ENCODE measurements at regions of chr4 and their contacts with region 1.

Region 1: DNA sequence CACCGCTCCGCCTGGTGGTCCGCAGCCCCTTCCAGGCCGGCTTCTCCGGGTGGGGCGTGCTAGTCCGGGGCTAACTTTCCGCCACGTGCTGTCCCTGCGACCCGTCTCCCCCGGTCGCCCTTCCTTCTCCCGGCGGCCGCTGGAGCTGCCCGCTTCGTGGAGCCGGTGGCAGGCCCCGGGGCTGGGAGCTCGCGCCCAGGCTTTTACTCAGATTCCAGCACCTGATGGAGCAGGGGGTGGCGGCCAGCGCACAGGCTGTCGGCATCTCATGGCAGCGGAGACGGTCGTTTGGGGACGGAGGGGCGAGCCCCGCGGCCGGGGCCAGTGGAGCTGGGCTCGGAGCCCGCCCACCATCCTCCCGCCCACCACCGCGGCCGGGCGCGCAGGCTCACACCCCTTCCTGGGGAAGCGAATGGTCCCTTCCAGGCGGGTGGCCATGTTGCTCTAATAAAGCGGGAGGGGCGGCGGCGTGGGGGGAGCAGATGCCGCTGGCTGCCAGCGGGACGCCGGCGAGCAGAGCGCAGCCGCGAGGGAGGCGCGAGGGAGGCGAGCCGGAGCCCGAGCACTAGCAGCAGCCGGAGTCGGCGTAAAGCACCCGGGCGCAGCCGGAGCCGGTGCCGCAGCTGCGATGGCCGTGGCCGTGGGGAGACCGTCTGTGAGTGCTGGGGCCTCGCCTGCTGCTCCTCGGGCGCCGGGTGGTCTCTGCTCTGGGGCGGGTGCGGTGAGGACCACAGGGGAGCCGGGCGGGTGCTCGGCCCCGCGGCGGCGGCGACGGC is at the start of gene SEPTIN11:
- DNase-seq: peak; percentile 83 to 90 (median 85)
- H3K4me3 ChIP-seq: peak within 1 kb of the TSS; percentile 83 to 86
- H3K4me3 Mint-ChIP-seq: peak within 1 kb of the TSS; percentile 90 to 94 (median 93)
- H3K27ac ChIP-seq: peak within 1 kb of the TSS; percentile 59
- H3K27ac Mint-ChIP-seq: peak within 1 kb of the TSS; percentile 79 to 94 (median 91)
- H3K4me1 ChIP-seq: peaks cover 23% of the 10 kb centered on the region
- H3K4me1 Mint-ChIP-seq: peaks cover 8 to 41% (median 23%) of the 10 kb centered on the region in 4 donors
- H3K27me3 ChIP-seq: no peaks in the 10 kb centered on the region
- H3K27me3 Mint-ChIP-seq: no peaks in the 10 kb centered on the region
- total RNA-seq, gene SEPTIN11: 25.2 to 30.2 TPM

Region 2: GRCh38 chr4:76772498-76773106 is 176.9 kb before region 1 on chr4:
- CTCF ChIA-PET with region 1: no interaction called
- POLR2A ChIA-PET with region 1: no interaction called
- intact Hi-C with region 1: no loop called
- DNase-seq: no peak
- H3K4me3 ChIP-seq: no peak overlapping the region
- H3K4me3 Mint-ChIP-seq: no peak overlapping the region
- H3K27ac ChIP-seq: no peak overlapping the region
- H3K27ac Mint-ChIP-seq: no peak overlapping the region
- H3K4me1 ChIP-seq: no peaks in the 10 kb centered on the region
- H3K4me1 Mint-ChIP-seq: peaks cover 0 to 2% (median 0%) of the 10 kb centered on the region in 4 donors
- H3K27me3 ChIP-seq: no peaks in the 10 kb centered on the region
- H3K27me3 Mint-ChIP-seq: peaks cover 7 to 10% of the 10 kb centered on the region in 2 donors

Region 3: GRCh38 chr4:76896731-76897535 is 52.5 kb before region 1 on chr4:
- CTCF ChIA-PET with region 1: no interaction called
- POLR2A ChIA-PET with region 1: interaction called, 6 read pairs
- intact Hi-C with region 1: loop called (anchors 1 kb)
- DNase-seq: peak; percentile 33 to 41 (median 35)
- H3K4me3 ChIP-seq: peak overlapping the region in 1 of 2 donors; percentile 49
- H3K4me3 Mint-ChIP-seq: peak overlapping the region in 6 of 8 donors; percentile 29 to 67 (median 46)
- H3K27ac ChIP-seq: no peak overlapping the region
- H3K27ac Mint-ChIP-seq: no peak overlapping the region
- H3K4me1 ChIP-seq: peaks cover 4% of the 10 kb centered on the region
- H3K4me1 Mint-ChIP-seq: peaks cover 8 to 14% (median 10%) of the 10 kb centered on the region in 4 donors
- H3K27me3 ChIP-seq: peaks cover 23% of the 10 kb centered on the region
- H3K27me3 Mint-ChIP-seq: peaks cover 27 to 37% of the 10 kb centered on the region in 2 donors

Region 4: GRCh38 chr4:76984127-76984526 is 34.7 kb after region 1 on chr4:
- CTCF ChIA-PET with region 1: interaction called, 4 read pairs
- POLR2A ChIA-PET with region 1: interaction called, 36 read pairs
- intact Hi-C with region 1: loop called (anchors 1 kb)
- DNase-seq: peak in 4 of 5 donors; percentile 36 to 56 (median 45)
- H3K4me3 ChIP-seq: peak overlapping the region in 1 of 2 donors; percentile 3
- H3K4me3 Mint-ChIP-seq: peak overlapping the region in 7 of 8 donors; percentile 34 to 85 (median 68)
- H3K27ac ChIP-seq: no peak overlapping the region
- H3K27ac Mint-ChIP-seq: peak overlapping the region; percentile 48 to 93 (median 80)
- H3K4me1 ChIP-seq: peaks cover 76% of the 10 kb centered on the region
- H3K4me1 Mint-ChIP-seq: peaks cover 61 to 95% (median 78%) of the 10 kb centered on the region in 4 donors
- H3K27me3 ChIP-seq: no peaks in the 10 kb centered on the region
- H3K27me3 Mint-ChIP-seq: no peaks in the 10 kb centered on the region

Region 5: GRCh38 chr4:77031544-77031943 is 82.1 kb after region 1 on chr4:
- CTCF ChIA-PET with region 1: no interaction called
- POLR2A ChIA-PET with region 1: interaction called, 4 read pairs
- intact Hi-C with region 1: loop called (anchors 5 kb)
- DNase-seq: peak in 4 of 5 donors; percentile 15 to 43 (median 29)
- H3K4me3 ChIP-seq: no peak overlapping the region
- H3K4me3 Mint-ChIP-seq: peak overlapping the region in 5 of 8 donors; percentile 8 to 55 (median 37)
- H3K27ac ChIP-seq: no peak overlapping the region
- H3K27ac Mint-ChIP-seq: peak overlapping the region; percentile 19 to 73 (median 60)
- H3K4me1 ChIP-seq: peaks cover 28% of the 10 kb centered on the region
- H3K4me1 Mint-ChIP-seq: peaks cover 26 to 32% (median 29%) of the 10 kb centered on the region in 4 donors
- H3K27me3 ChIP-seq: no peaks in the 10 kb centered on the region
- H3K27me3 Mint-ChIP-seq: no peaks in the 10 kb centered on the region